GM12878 (cell line): ENCODE measurements at regions of chr5 and their contacts with region 1.

Region 1: DNA sequence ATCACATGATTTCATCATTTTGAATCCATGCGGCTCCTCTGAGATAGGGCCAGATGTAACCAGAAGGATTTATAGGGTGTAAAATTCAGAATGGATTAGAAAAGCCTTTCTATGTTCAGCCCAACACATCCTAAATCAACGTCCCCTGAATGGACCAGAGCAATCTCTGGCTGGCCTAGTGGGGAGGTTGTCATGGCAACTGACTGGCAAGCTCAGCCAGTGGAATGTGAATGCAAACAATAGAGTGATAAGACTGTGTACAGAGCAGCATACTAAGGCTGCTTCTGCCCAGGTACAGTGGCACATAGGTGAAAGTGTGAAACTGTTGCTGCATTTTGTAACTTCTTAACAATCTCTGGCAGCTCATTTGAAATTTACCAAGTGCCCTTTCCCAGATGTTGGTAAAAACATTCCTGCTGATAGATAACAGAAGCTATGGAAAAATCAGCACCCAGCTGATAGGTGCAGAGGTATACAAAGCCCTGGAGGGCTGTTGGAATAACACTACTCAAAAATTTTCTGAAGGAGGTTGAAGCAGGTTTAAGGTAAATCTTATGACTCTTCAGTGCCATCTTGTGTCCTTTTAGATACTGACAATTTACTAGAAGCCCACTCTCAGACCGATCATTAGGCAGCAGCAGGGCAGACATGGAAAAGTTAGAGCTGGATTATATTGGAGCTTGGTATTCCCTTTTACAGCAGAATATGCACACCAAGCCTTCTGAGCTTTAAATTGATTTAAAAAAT is 267.2 kb downstream of the RAB3C start:
- DNase-seq: no peak
- ATAC-seq: peak; percentile 75
- H3K4me3 ChIP-seq: no peak overlapping the region
- H3K27ac ChIP-seq: no peak overlapping the region
- H3K4me1 ChIP-seq: no peaks in the 10 kb centered on the region
- H3K27me3 ChIP-seq: no peaks in the 10 kb centered on the region
- CTCF ChIP-seq: peak; percentile 33 to 57 (median 41); a peak in 4 of 6 replicates
- EP300 ChIP-seq: no peak
- POLR2A ChIP-seq: no peak
- RAD21 ChIP-seq: peak; percentile 52

Region 2: DNA sequence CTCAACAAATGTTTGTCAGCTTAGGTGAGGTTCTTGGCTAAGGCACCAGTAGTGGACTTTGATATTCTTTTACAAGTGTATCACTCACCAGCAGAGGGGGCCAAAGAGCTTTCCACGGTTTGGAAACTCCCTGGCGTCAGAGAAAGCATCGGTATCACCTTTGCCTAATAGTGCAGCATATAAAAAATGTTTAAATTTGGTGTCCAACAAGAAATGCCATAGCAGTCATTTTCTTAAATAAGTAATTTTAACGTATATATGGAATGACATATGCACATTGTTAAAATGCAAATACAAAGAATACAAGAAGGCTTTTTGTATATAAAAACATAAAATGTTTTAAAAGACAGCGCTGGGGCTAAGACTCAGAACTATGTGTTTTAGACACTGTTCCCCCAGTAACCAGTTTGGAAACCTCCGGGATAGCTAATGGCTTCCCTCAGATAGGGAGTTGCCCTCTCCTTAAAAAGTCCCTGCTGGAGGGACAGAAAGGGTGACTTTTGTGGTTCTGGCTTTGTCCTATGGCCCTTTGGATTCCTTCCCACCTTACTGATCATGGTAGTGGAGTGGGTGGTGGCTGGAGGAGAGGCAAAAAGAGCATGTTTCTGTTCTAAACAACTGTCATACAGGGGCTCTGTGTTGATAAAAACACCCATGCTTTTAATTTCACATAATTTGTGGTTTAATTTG is 1551.7 kb before region 1 on chr5:
- CTCF ChIA-PET with region 1: interaction called, 12 read pairs
- POLR2A ChIA-PET with region 1: no interaction called
- RAD21 ChIA-PET with region 1: no interaction called
- SMC1A ChIA-PET with region 1: no interaction called
- in situ Hi-C with region 1: no loop called
- intact Hi-C with region 1: no loop called
- DNase-seq: peak; percentile 34
- ATAC-seq: peak; percentile 94
- H3K4me3 ChIP-seq: 0 out of 2 replicates have a peak overlapping the region, but pooled peaks have one; percentile 18
- H3K27ac ChIP-seq: no peak overlapping the region
- H3K4me1 ChIP-seq: peaks cover 6% of the 10 kb centered on the region
- H3K27me3 ChIP-seq: no peaks in the 10 kb centered on the region
- CTCF ChIP-seq: peak; percentile 75 to 81 (median 76)
- EP300 ChIP-seq: no peak
- POLR2A ChIP-seq: no peak
- RAD21 ChIP-seq: peak; percentile 72

Region 3: GRCh38 chr5:58466939-58467338 is 383.2 kb before region 1 on chr5:
- CTCF ChIA-PET with region 1: interaction called, 13 read pairs
- POLR2A ChIA-PET with region 1: no interaction called
- RAD21 ChIA-PET with region 1: no interaction called
- SMC1A ChIA-PET with region 1: interaction called, 4 read pairs
- in situ Hi-C with region 1: no loop called
- intact Hi-C with region 1: no loop called
- DNase-seq: no peak
- ATAC-seq: peak; percentile 97
- H3K4me3 ChIP-seq: no peak overlapping the region
- H3K27ac ChIP-seq: no peak overlapping the region
- H3K4me1 ChIP-seq: peaks cover 3% of the 10 kb centered on the region; the same call in 1 of the 2 replicates
- H3K27me3 ChIP-seq: no peaks in the 10 kb centered on the region
- CTCF ChIP-seq: no peak
- EP300 ChIP-seq: no peak
- POLR2A ChIP-seq: no peak
- RAD21 ChIP-seq: no peak

Region 4: DNA sequence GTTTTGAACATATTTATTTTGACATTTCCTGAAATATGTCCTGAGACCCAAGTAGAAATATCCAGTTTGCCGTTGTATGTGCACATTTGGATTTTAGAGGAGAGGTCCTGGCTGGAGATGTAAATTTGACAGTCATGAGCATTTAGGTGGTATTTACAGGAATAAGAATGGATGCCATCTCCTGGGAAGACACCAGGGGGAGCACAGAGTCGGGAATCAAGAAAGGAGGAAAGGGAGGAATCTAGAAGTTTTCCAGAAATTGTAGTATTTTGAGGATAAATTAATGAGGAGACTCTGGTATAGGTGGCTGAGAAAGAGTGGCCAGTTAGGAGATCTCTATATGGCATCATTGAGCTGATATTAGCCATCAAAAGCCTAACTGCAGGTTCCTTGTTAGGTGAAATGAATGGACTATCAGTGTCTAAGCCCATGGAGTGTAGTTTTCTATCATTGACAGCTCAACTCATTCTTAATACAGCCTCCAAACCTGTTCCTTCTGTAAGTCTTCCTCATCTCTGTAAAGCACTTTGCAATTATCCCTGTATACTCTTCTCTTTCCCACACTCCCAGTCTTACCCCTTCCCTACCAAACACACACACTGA is 351.7 kb before region 1 on chr5:
- CTCF ChIA-PET with region 1: interaction called, 73 read pairs
- POLR2A ChIA-PET with region 1: no interaction called
- RAD21 ChIA-PET with region 1: interaction called, 6 read pairs
- SMC1A ChIA-PET with region 1: interaction called, 28 read pairs
- in situ Hi-C with region 1: loop called (anchors 10 kb)
- intact Hi-C with region 1: loop called (anchors 1 kb)
- DNase-seq: no peak
- ATAC-seq: no peak
- H3K4me3 ChIP-seq: no peak overlapping the region
- H3K27ac ChIP-seq: no peak overlapping the region
- H3K4me1 ChIP-seq: no peaks in the 10 kb centered on the region
- H3K27me3 ChIP-seq: no peaks in the 10 kb centered on the region; a peak in 1 of 4 replicates
- CTCF ChIP-seq: peak; percentile 36 to 44 (median 39); a peak in 4 of 6 replicates
- EP300 ChIP-seq: no peak
- POLR2A ChIP-seq: no peak
- RAD21 ChIP-seq: peak; percentile 39

Region 5: GRCh38 chr5:58838732-58839131 is 11.4 kb before region 1 on chr5:
- CTCF ChIA-PET with region 1: interaction called, 8 read pairs
- POLR2A ChIA-PET with region 1: no interaction called
- RAD21 ChIA-PET with region 1: interaction called, 5 read pairs
- SMC1A ChIA-PET with region 1: interaction called, 15 read pairs
- in situ Hi-C with region 1: no loop called
- intact Hi-C with region 1: no loop called
- DNase-seq: no peak
- ATAC-seq: no peak
- H3K4me3 ChIP-seq: no peak overlapping the region
- H3K27ac ChIP-seq: no peak overlapping the region
- H3K4me1 ChIP-seq: no peaks in the 10 kb centered on the region
- H3K27me3 ChIP-seq: no peaks in the 10 kb centered on the region; a peak in 1 of 4 replicates
- CTCF ChIP-seq: no peak
- EP300 ChIP-seq: no peak
- POLR2A ChIP-seq: no peak
- RAD21 ChIP-seq: no peak

Region 6: GRCh38 chr5:58871648-58872242 is 21.7 kb after region 1 on chr5:
- CTCF ChIA-PET with region 1: interaction called, 53 read pairs
- POLR2A ChIA-PET with region 1: interaction called, 5 read pairs
- RAD21 ChIA-PET with region 1: interaction called, 3 read pairs
- SMC1A ChIA-PET with region 1: interaction called, 3 read pairs
- in situ Hi-C with region 1: no loop called
- intact Hi-C with region 1: no loop called
- DNase-seq: no peak
- ATAC-seq: peak; percentile 79
- H3K4me3 ChIP-seq: no peak overlapping the region
- H3K27ac ChIP-seq: no peak overlapping the region
- H3K4me1 ChIP-seq: no peaks in the 10 kb centered on the region
- H3K27me3 ChIP-seq: no peaks in the 10 kb centered on the region
- CTCF ChIP-seq: peak; percentile 46 to 53 (median 49); a peak in 5 of 6 replicates
- EP300 ChIP-seq: no peak
- POLR2A ChIP-seq: no peak
- RAD21 ChIP-seq: peak; percentile 33

Region 7: DNA sequence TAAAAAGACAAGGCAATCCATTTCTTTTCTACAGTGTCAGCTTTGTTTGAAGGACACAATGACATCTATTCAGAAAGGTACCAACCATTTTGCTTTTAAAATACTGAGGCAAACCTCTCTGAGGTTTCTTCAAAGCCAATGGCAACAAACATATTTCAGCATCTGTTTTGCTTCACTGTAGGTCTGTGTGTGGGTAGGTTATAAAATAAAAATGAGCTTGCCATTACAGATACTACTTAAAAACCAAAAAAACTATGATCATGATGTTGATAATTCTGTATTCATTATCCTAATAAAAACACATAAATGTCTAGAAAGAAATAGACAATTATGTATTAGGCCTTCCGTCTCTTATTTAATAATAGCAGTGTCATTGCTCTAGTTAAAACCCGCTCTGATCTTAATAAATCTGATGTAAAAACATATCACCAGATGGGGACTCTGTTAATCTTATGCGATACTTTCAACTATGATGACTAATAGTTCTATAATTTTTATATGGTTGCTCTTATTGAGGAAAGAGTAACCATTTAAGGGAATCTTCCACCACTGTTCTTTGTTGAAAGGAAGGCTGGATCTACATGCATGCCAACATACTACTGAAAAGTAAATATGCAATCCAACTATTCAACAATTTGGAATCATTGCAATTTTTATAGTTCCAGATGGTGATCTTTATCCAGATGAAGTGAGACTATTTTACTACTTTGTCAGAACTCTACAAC is 396.2 kb after region 1 on chr5:
- CTCF ChIA-PET with region 1: no interaction called
- POLR2A ChIA-PET with region 1: no interaction called
- RAD21 ChIA-PET with region 1: no interaction called
- SMC1A ChIA-PET with region 1: no interaction called
- in situ Hi-C with region 1: no loop called
- intact Hi-C with region 1: no loop called
- DNase-seq: no peak
- ATAC-seq: no peak
- H3K4me3 ChIP-seq: no peak overlapping the region
- H3K27ac ChIP-seq: no peak overlapping the region
- H3K4me1 ChIP-seq: no peaks in the 10 kb centered on the region
- H3K27me3 ChIP-seq: no peaks in the 10 kb centered on the region; a peak in 1 of 4 replicates
- CTCF ChIP-seq: no peak
- EP300 ChIP-seq: no peak
- POLR2A ChIP-seq: no peak
- RAD21 ChIP-seq: no peak

Region 8: DNA sequence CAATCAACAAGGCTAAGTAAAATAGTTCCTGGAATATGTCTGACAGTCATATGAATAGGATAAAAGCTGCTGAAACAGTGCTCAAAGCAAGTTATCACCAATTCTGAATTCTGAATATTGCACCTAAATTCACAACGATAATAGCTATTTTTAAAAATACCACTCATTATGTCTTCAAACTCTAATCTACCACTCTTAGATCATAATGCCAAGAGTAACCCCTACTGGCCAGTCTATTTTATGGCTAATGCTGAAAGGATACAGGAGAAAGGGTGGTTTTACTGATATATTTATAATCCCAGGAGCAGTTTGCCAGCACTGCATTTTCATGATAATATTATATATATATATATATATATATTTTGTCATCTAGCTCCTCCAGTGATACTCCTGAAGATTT is 810.6 kb after region 1 on chr5:
- CTCF ChIA-PET with region 1: no interaction called
- POLR2A ChIA-PET with region 1: no interaction called
- RAD21 ChIA-PET with region 1: no interaction called
- SMC1A ChIA-PET with region 1: no interaction called
- in situ Hi-C with region 1: no loop called
- intact Hi-C with region 1: no loop called
- DNase-seq: no peak
- ATAC-seq: peak; percentile 77
- H3K4me3 ChIP-seq: no peak overlapping the region
- H3K27ac ChIP-seq: no peak overlapping the region
- H3K4me1 ChIP-seq: no peaks in the 10 kb centered on the region
- H3K27me3 ChIP-seq: no peaks in the 10 kb centered on the region
- CTCF ChIP-seq: peak; percentile 25 to 57 (median 42); a peak in 3 of 6 replicates
- EP300 ChIP-seq: no peak
- POLR2A ChIP-seq: no peak
- RAD21 ChIP-seq: peak; percentile 70